ENCODE measurements at regions of chr1 and their contacts with region 1.

Region 1: DNA sequence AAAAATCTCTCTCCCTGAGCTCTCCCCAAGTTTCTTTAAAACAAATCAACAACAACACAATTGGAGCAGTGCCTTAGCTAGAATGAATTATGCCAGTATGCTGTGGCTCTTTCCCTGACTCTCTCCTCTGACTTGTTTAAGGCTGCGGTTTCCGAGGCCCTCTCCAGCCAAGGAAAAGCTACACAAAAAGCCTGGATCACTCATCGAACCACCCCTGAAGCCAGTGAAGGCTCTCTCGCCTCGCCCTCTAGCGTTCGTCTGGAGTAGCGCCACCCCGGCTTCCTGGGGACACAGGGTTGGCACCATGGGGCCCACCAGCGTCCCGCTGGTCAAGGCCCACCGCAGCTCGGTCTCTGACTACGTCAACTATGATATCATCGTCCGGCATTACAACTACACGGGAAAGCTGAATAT is 1.9 kb downstream of the S1PR1 start:
- DNase-seq: peak; percentile 90
- H3K4me3 Mint-ChIP-seq: peak overlapping the region; percentile 95
- H3K27ac Mint-ChIP-seq: peak overlapping the region; percentile 98
- H3K4me1 Mint-ChIP-seq: peaks cover 51% of the 10 kb centered on the region
- H3K27me3 Mint-ChIP-seq: no peaks in the 10 kb centered on the region

Region 2: GRCh38 chr1:100928128-100928527 is 310.6 kb before region 1 on chr1:
- CTCF ChIA-PET with region 1: interaction called, 47 read pairs
- POLR2A ChIA-PET with region 1: interaction called, 90 read pairs
- DNase-seq: no peak
- H3K4me3 Mint-ChIP-seq: no peak overlapping the region
- H3K27ac Mint-ChIP-seq: no peak overlapping the region
- H3K4me1 Mint-ChIP-seq: peaks cover 54% of the 10 kb centered on the region
- H3K27me3 Mint-ChIP-seq: no peaks in the 10 kb centered on the region

Region 3: GRCh38 chr1:101081496-101082488 is 156.9 kb before region 1 on chr1:
- CTCF ChIA-PET with region 1: interaction called, 23 read pairs
- POLR2A ChIA-PET with region 1: interaction called, 52 read pairs
- DNase-seq: peak; percentile 71
- H3K4me3 Mint-ChIP-seq: peak overlapping the region; percentile 33
- H3K27ac Mint-ChIP-seq: peak overlapping the region; percentile 96
- H3K4me1 Mint-ChIP-seq: peaks cover 50% of the 10 kb centered on the region
- H3K27me3 Mint-ChIP-seq: no peaks in the 10 kb centered on the region

Region 4: GRCh38 chr1:101128211-101128727 is 110.4 kb before region 1 on chr1:
- CTCF ChIA-PET with region 1: interaction called, 18 read pairs
- POLR2A ChIA-PET with region 1: interaction called, 54 read pairs
- DNase-seq: peak; percentile 18
- H3K4me3 Mint-ChIP-seq: peak overlapping the region; percentile 52
- H3K27ac Mint-ChIP-seq: peak overlapping the region; percentile 79
- H3K4me1 Mint-ChIP-seq: peaks cover 65% of the 10 kb centered on the region
- H3K27me3 Mint-ChIP-seq: peaks cover 4% of the 10 kb centered on the region

Region 5: GRCh38 chr1:101198842-101199636 is 39.6 kb before region 1 on chr1:
- CTCF ChIA-PET with region 1: interaction called, 6 read pairs
- POLR2A ChIA-PET with region 1: interaction called, 131 read pairs
- DNase-seq: peak; percentile 70
- H3K4me3 Mint-ChIP-seq: peak overlapping the region; percentile 6
- H3K27ac Mint-ChIP-seq: peak overlapping the region; percentile 84
- H3K4me1 Mint-ChIP-seq: peaks cover 30% of the 10 kb centered on the region
- H3K27me3 Mint-ChIP-seq: no peaks in the 10 kb centered on the region

Region 6: GRCh38 chr1:101282314-101283038 is 43.8 kb after region 1 on chr1:
- CTCF ChIA-PET with region 1: interaction called, 244 read pairs
- POLR2A ChIA-PET with region 1: interaction called, 391 read pairs
- DNase-seq: no peak
- H3K4me3 Mint-ChIP-seq: no peak overlapping the region
- H3K27ac Mint-ChIP-seq: no peak overlapping the region
- H3K4me1 Mint-ChIP-seq: peaks cover 92% of the 10 kb centered on the region
- H3K27me3 Mint-ChIP-seq: no peaks in the 10 kb centered on the region

Region 7: GRCh38 chr1:101645810-101646209 is 407.1 kb after region 1 on chr1:
- CTCF ChIA-PET with region 1: no interaction called
- POLR2A ChIA-PET with region 1: no interaction called
- DNase-seq: no peak
- H3K4me3 Mint-ChIP-seq: no peak overlapping the region
- H3K27ac Mint-ChIP-seq: no peak overlapping the region
- H3K4me1 Mint-ChIP-seq: no peaks in the 10 kb centered on the region
- H3K27me3 Mint-ChIP-seq: no peaks in the 10 kb centered on the region

Region 8: DNA sequence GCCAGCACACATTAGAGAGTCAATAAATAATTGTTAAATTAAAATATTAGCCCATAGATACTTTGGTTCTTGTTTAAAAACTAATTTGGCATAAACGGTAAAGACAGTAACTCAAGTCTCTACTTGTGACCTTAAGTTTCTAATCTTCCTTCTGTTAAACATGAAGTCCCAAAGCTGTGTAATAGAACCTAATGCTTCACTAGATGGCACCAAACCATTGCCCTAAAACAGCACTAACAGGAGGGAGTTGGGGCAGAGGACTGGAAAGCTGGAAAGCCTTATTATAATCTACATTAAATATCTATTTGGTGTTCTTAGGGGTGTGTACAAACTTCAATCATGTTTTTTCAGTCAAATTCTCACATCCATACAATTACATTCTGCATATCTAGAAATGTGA is 581.4 kb after region 1 on chr1:
- CTCF ChIA-PET with region 1: no interaction called
- POLR2A ChIA-PET with region 1: no interaction called
- DNase-seq: no peak
- H3K4me3 Mint-ChIP-seq: no peak overlapping the region
- H3K27ac Mint-ChIP-seq: no peak overlapping the region
- H3K4me1 Mint-ChIP-seq: no peaks in the 10 kb centered on the region
- H3K27me3 Mint-ChIP-seq: no peaks in the 10 kb centered on the region

Measured in activated CD4-positive, alpha-beta memory T cell treated with anti-CD3 and anti-CD28 coated beads, Interleukin-2, amount 10 ng/mL, durations not matched to agents 7 days and 5 days (primary cell).